ENCODE measurements at regions of chr11 and their contacts with region 1.

Region 1: DNA sequence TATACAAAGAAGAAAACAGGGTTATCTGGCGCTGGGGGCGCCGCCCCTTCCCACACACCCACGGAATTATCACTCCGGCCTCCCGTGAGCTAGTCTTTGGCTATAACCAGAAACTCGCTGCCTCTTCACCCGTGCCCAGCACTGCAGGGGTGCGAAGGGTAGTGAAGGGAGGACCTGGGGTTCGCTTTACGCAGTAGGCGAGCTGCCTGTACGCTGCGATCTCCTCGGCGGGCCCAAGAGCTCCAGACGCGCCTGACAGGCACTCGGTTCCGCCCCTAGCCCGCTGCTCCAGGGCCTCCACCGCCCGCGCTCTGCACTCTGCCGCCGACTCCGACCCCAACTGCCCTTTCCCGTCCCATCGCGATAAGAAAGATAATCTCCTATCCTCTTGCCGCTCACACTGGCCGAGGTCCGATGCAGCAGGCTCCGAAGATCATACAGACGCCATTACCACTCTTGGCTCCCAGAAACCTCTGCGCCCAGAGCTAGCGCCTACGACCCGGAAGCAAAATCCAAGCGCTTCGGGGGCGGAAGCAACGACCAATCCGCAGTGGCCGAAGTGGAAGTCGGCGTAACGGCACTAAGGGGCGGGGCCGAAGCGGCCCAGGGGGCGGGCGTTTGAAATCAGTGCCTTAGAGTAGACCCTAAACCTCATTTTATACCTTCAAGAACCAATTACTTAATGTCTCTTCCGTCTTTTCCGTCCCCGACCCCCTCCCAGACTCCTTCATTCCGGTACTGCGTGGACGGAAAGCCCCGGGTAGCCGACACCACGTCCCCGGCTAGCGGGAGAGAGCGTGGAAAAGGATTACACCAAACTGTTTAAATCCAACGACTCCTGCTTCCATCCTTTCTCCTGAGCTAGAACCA is at the starts of genes CWC15 and KDM4D:
- DNase-seq: peak; percentile 98
- H3K4me3 ChIP-seq: peak within 1 kb of the TSS; percentile 70 to 89 (median 76)
- H3K27ac ChIP-seq: peak within 1 kb of the TSS; percentile 75 to 85 (median 82)
- H3K4me1 ChIP-seq: peaks cover 10 to 25% (median 16%) of the 10 kb centered on the region in 4 donors
- H3K27me3 ChIP-seq: no peaks in the 10 kb centered on the region
- CTCF ChIP-seq: no peak
- EP300 ChIP-seq: no peak
- POLR2A ChIP-seq: no peak
- total RNA-seq, gene CWC15: 22.9 to 40.3 (median 27.0) TPM
- total RNA-seq, gene KDM4D: under 0.01 to 0.58 (median 0.40) TPM

Region 2: DNA sequence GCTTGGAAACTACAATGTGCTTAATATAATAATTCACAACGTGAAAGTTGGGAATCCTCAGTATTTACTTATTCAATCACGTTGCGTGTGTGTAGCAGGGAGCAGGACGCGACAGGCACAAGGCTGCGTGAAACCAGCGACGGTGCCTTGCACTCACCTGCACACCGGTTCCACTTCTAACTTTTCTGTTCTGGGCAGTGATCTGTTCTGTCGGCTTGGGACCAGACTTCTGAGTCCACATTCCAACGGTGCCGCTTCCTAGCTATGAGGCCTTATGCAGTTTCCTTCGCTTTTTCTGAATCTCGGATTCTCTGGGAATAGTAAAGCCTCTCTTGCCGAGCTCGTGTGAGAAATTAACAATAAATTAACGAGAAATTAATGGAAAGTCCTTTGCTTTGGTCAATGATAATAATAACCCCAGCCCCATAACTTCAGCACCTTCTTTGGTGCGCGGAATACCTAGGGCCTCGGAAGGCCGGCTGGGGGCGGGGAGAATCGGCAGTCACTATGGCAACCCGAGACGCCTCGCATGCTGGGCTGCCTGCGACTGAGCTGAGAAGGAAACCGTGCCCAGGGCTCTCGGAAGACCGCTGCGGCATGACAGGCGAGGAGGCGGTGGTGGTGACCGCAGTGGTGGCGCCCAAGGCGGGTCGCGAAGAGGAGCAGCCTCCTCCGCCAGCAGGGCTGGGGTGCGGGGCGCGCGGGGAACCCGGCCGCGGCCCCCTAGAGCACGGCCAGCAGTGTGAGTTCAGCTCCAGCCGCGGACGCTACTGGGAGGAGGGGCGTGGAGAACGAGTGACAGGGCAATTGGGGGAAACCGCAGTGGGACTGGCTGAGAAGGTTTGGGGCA is 461.2 kb before region 1 on chr11 and contains the start of gene C11orf97:
- intact Hi-C with region 1: no loop called
- DNase-seq: no peak
- H3K4me3 ChIP-seq: peak within 1 kb of the TSS; percentile 57 to 66 (median 58)
- H3K27ac ChIP-seq: no peak within 1 kb of the TSS
- H3K4me1 ChIP-seq: peaks cover 7 to 13% (median 11%) of the 10 kb centered on the region in 4 donors
- H3K27me3 ChIP-seq: no peaks in the 10 kb centered on the region
- CTCF ChIP-seq: no peak
- EP300 ChIP-seq: no peak
- POLR2A ChIP-seq: no peak
- total RNA-seq, gene C11orf97: not detected

Region 3: DNA sequence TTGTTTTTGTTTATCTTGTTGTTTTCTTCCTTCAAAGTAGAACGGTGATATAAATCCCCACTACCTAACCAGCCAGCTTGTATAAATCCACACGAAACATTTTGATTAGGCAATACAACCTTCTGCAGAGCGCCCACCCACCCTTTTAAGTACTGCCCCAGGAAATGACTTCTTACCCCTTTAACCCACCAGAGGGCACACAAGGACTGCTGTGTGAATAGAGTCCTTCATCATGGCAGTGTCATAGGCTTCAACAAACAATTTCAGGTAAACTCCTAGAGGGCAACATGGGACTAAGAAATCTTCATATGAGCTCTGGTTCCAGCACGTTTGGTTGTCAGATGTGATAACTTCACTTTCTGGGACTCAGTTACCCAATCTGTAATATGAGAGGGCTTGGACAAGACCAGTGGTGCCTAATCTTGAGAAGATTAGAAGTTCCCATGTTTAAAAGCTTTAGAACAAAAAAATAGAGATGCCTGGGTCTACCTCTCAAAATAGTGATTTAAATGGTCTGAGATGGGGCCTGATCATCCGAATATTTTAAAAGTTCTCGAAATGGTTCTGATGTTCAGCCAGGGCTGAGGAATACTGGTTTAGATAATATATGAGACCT is 350.1 kb before region 1 on chr11:
- intact Hi-C with region 1: loop called (anchors 5 kb)
- DNase-seq: no peak
- H3K4me3 ChIP-seq: no peak overlapping the region
- H3K27ac ChIP-seq: no peak overlapping the region
- H3K4me1 ChIP-seq: peaks cover 0 to 6% (median 0%) of the 10 kb centered on the region in 4 donors
- H3K27me3 ChIP-seq: no peaks in the 10 kb centered on the region
- CTCF ChIP-seq: peak; percentile 78 to 88 (median 86)
- EP300 ChIP-seq: no peak
- POLR2A ChIP-seq: no peak

Region 4: GRCh38 chr11:94885133-94885532 is 88.2 kb before region 1 on chr11:
- intact Hi-C with region 1: loop called (anchors 10 kb)
- DNase-seq: no peak
- H3K4me3 ChIP-seq: no peak overlapping the region
- H3K27ac ChIP-seq: no peak overlapping the region
- H3K4me1 ChIP-seq: peaks cover 0 to 25% (median 22%) of the 10 kb centered on the region in 4 donors
- H3K27me3 ChIP-seq: no peaks in the 10 kb centered on the region
- CTCF ChIP-seq: no peak
- EP300 ChIP-seq: no peak
- POLR2A ChIP-seq: no peak

Region 5: DNA sequence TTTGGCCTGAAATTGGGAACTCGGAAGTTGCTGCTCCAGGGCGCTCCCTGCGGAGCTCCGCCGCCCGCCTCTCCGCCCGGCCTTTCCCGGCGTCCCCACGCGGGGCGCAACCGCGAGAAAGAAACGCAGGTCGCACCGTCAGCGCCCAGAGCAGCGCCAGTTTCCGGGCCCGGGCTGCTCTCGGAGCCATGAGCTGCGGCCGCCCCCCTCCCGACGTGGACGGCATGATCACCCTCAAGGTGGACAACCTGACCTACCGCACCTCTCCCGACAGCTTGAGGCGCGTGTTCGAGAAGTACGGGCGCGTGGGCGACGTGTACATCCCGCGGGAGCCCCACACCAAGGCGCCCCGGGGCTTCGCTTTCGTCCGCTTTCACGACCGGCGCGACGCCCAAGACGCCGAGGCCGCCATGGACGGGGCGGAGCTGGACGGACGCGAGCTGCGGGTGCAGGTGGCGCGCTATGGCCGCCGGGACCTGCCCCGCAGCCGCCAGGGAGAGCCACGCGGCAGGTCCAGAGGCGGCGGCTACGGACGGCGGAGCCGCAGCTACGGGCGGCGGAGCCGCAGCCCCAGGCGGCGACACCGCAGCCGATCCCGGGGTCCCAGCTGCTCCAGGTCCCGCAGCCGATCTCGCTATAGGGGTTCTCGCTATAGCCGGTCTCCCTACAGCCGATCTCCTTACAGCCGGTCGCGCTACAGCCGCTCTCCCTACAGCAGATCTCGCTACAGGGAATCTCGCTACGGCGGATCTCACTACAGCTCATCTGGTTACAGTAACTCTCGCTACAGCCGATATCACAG is 93.9 kb after region 1 on chr11:
- intact Hi-C with region 1: loop called (anchors 1 kb)
- DNase-seq: peak; percentile 95
- H3K4me3 ChIP-seq: peak overlapping the region; percentile 78 to 89 (median 84)
- H3K27ac ChIP-seq: peak overlapping the region; percentile 97 to 98 (median 98)
- H3K4me1 ChIP-seq: peaks cover 11 to 28% (median 26%) of the 10 kb centered on the region in 4 donors
- H3K27me3 ChIP-seq: peaks cover 0 to 7% (median 0%) of the 10 kb centered on the region in 4 donors
- CTCF ChIP-seq: peak; percentile 29 to 75 (median 45)
- EP300 ChIP-seq: no peak
- POLR2A ChIP-seq: no peak

Region 6: GRCh38 chr11:95764267-95764898 is 791.0 kb after region 1 on chr11:
- intact Hi-C with region 1: loop called (anchors 10 kb)
- DNase-seq: no peak
- H3K4me3 ChIP-seq: no peak overlapping the region
- H3K27ac ChIP-seq: no peak overlapping the region
- H3K4me1 ChIP-seq: peaks cover 0 to 9% (median 0%) of the 10 kb centered on the region in 4 donors
- H3K27me3 ChIP-seq: no peaks in the 10 kb centered on the region
- CTCF ChIP-seq: peak; percentile 64 to 70 (median 68)
- EP300 ChIP-seq: no peak
- POLR2A ChIP-seq: no peak

Region 7: GRCh38 chr11:95790123-95790932 is 817.0 kb after region 1 on chr11 and contains the start of gene CEP57:
- intact Hi-C with region 1: loop called (anchors 10 kb)
- DNase-seq: peak; percentile 99
- H3K4me3 ChIP-seq: peak within 1 kb of the TSS; percentile 84 to 94 (median 88)
- H3K27ac ChIP-seq: peak within 1 kb of the TSS; percentile 97 to 99 (median 98)
- H3K4me1 ChIP-seq: peaks cover 23 to 31% (median 29%) of the 10 kb centered on the region in 4 donors
- H3K27me3 ChIP-seq: no peaks in the 10 kb centered on the region
- CTCF ChIP-seq: no peak
- EP300 ChIP-seq: no peak
- POLR2A ChIP-seq: peak; percentile 27
- total RNA-seq, gene CEP57: 22.9 to 46.9 (median 23.9) TPM